K562 (cell line): ENCODE measurements at regions of chr1 and their contacts with region 1.

Region 1: DNA sequence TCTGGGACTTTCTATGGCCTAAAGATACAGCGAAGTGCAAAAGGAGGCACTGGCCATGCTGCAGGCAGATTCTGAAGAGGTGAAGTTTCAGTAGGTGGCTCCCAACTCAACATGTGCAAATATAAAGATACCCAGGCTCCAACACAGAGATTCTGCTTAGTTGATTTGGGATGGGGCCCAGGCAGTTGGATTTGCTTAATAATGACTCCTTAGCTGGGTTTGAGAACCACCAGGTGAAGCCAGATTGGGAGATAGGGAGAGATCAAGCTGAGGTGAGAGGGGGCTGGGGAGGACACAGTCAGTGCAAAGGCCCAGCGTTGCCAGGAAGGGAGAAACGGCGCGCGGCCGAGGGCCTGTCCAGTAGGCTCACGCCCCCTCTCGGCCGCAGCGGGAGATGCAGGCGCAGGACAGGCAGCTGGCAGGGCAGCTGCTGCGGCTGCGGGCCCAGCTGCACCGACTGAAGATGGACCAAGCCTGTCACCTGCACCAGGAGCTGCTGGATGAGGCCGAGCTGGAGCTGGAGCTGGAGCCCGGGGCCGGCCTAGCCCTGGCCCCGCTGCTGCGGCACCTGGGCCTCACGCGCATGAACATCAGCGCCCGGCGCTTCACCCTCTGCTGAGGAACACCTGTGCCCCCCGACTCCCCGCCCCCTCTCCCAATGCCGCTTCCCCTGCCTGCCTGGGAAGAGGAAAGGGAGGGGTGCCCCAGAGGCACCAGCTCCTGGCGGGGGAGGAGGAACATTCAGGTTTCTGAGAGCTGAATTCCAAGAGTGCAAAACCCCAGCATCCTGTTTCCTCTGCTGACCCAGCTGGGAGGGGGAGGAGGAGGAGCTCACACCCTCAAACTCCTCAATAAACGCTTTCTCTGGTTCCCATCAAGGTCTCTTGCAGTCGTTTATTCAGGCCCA is 1.2 kb downstream of the FAM167B start:
- DNase-seq: peak; percentile 90 to 92 (median 92)
- ATAC-seq: peak; percentile 93
- H3K4me3 ChIP-seq: no peak overlapping the region
- H3K27ac ChIP-seq: no peak overlapping the region
- H3K4me1 ChIP-seq: peaks cover 27 to 33% of the 10 kb centered on the region in 2 experiments; a peak in 4 of 5 replicates
- H3K27me3 ChIP-seq: no peaks in the 10 kb centered on the region
- CTCF ChIP-seq: peak; percentile 94 to 97 (median 95)
- EP300 ChIP-seq: peak; percentile 31; the same call in 1 of the 2 replicates
- POLR2A ChIP-seq: no peak
- RAD21 ChIP-seq: peak; percentile 72 to 91

Region 2: GRCh38 chr1:31669786-31670592 is 578.2 kb before region 1 on chr1:
- CTCF ChIA-PET with region 1: no interaction called
- POLR2A ChIA-PET with region 1: no interaction called
- in situ Hi-C with region 1: no loop called
- intact Hi-C with region 1: no loop called
- DNase-seq: peak in 3 of 4 experiments; percentile 27 to 42 (median 39)
- ATAC-seq: peak; percentile 50
- H3K4me3 ChIP-seq: no peak overlapping the region
- H3K27ac ChIP-seq: no peak overlapping the region
- H3K4me1 ChIP-seq: peaks cover 0 to 21% of the 10 kb centered on the region in 2 experiments; a peak in 3 of 5 replicates
- H3K27me3 ChIP-seq: peaks cover 54 to 100% of the 10 kb centered on the region in 2 experiments
- CTCF ChIP-seq: no peak
- EP300 ChIP-seq: no peak
- POLR2A ChIP-seq: no peak
- RAD21 ChIP-seq: 0 out of 4 replicates have a peak, but pooled peaks of 1 of the 2 experiments have one; percentile 4

Region 3: DNA sequence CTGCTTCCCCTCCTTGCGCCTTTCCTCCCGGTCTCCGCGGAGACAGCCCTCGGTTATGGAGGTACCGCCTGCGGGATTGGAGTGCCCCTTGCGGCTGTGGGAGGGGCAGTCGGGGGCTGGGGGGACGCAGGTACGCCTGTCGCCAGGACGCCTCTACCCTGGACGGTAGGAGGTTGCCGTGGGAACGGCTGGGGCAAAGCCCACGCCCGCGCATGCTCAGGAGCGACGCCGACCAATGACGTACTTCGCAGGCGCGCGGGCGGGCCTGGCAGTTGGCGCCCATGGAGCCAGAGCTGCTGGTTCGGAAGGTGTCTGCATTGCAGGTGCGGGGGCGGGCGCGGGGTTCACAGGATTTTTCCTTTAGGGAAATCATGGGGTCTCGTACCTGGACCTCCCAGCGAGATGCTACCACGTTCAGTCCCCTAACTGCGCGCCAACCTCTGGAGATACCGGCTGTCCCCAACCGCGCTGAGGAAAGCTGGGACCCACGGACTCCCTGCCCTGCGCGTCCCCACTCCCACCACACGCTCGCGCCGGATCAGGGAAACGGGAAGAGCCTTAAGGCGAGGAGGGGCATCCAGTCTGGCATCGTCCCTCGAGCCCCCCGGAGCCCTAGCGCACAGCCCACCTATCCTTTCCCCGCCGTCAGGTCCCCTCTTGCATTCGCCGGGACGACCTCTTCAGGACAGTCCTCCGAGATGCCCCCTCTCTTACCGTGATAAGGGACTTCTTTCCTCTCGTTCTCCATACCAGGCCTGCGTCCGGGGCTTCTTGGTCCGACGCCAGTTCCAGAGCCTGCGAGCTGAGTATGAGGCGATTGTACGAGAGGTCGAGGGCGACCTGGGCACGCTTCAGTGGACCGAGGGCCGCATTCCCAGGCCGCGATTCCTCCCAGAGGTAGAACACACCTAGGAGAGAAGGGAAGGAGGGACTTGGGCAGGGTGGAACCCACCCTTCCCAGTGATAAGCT is 42.5 kb before region 1 on chr1 and contains the start of gene IQCC:
- CTCF ChIA-PET with region 1: no interaction called
- POLR2A ChIA-PET with region 1: interaction called, 3 read pairs
- in situ Hi-C with region 1: no loop called
- intact Hi-C with region 1: loop called (anchors 5 kb)
- DNase-seq: peak; percentile 96 to 98 (median 97)
- ATAC-seq: peak; percentile 79
- H3K4me3 ChIP-seq: peak within 1 kb of the TSS; percentile 74
- H3K27ac ChIP-seq: peak within 1 kb of the TSS; percentile 87
- H3K4me1 ChIP-seq: peaks cover 22 to 47% of the 10 kb centered on the region in 2 experiments
- H3K27me3 ChIP-seq: no peaks in the 10 kb centered on the region
- CTCF ChIP-seq: peak in 2 of 3 experiments; percentile 23 to 30; a peak in 2 of 6 replicates
- EP300 ChIP-seq: peak; percentile 43
- POLR2A ChIP-seq: peak; percentile 94
- RAD21 ChIP-seq: peak in 1 of 2 experiments; percentile 10; a peak in 1 of 4 replicates
- polyA plus RNA-seq, gene IQCC: 8.4 to 10.4 TPM

Region 4: DNA sequence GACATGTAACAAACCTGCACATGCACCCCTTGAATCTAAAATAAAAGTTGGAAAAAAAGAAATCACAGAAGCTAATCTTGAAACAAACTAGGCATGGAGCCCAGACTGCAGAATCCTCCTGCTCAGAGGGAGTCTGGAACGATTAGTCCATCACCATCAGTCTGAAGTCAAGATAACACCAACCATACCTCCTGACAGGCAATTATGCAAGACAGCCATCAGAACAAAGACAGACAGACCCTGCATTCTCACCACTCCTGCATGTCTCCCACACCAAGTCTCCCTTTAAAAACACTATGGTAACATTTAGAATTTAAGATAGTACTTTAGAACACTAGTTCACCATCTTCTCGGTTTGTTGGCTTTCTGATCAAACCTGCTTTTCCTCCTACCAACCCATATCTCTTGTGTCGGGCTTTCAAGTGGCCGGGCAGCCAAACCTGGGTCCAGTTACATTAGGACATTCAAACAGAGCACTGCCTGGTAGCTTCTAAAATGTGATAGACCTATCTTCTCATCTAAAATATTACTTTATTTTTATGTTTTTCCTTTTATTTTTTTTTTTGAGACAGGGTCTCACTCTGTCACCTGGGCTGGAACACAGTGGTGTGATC is 558.8 kb after region 1 on chr1:
- CTCF ChIA-PET with region 1: no interaction called
- POLR2A ChIA-PET with region 1: no interaction called
- in situ Hi-C with region 1: no loop called
- intact Hi-C with region 1: no loop called
- DNase-seq: no peak
- ATAC-seq: peak; percentile 52
- H3K4me3 ChIP-seq: no peak overlapping the region
- H3K27ac ChIP-seq: no peak overlapping the region
- H3K4me1 ChIP-seq: no peaks in the 10 kb centered on the region; a peak in 2 of 5 replicates
- H3K27me3 ChIP-seq: no peaks in the 10 kb centered on the region
- CTCF ChIP-seq: no peak
- EP300 ChIP-seq: no peak
- POLR2A ChIP-seq: peak; percentile 21; the same call in 1 of the 2 replicates
- RAD21 ChIP-seq: no peak